K562 (cell line): ENCODE measurements at regions of chr1 and their contacts with region 1.

Region 1: DNA sequence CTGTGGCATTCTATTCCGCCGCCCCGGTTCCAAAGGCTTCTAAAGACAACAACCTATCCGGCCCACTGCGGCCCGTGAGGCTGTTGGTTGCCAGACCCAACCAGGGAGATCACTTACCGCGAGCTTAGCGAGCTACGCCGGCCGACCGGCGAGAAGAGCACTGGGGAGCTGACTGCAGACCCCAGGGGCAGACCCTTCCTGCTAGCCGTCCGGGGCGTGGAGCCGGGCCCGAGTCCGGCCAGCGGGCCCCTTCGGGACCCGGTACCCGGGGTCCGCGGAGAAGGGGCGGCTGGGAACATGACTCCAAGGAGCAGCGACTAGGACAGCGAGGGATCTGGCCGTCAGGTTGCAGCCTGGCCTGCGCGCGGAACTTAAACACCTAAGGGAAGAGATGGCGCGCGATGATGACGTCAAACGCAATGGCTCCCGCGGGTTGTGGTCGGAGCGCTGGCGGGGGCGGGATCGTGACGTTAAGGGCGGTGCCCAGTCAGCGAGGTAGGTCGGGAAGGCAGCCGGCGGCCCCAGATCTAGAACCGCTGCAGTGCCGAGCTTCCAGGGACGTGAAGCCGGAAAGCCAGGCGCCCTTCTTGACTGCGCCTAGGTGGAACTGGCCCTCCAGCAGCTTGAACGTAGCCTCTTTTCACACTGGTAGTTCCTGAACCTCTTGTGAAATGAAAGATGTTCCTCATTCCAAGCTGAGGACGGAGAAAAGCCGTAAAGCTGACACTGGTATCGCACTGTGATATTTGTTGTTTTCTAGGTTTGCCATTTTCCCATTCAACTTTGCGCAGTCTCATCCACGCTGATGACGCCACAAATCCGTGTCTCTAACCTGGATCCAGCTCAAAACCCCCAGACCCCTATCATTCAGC is at the start of gene NUP133:
- DNase-seq: peak; percentile 98 to 100 (median 98)
- ATAC-seq: peak; percentile 96
- H3K4me3 ChIP-seq: peak within 1 kb of the TSS; percentile 96
- H3K27ac ChIP-seq: peak within 1 kb of the TSS; percentile 97
- H3K4me1 ChIP-seq: peaks cover 6 to 14% of the 10 kb centered on the region in 2 experiments; a peak in 3 of 5 replicates
- H3K27me3 ChIP-seq: no peaks in the 10 kb centered on the region
- CTCF ChIP-seq: no peak
- EP300 ChIP-seq: no peak
- POLR2A ChIP-seq: peak; percentile 99
- RAD21 ChIP-seq: no peak
- polyA plus RNA-seq, gene NUP133: 21.7 to 35.0 TPM

Region 2: GRCh38 chr1:229248821-229249817 is 259.1 kb before region 1 on chr1:
- CTCF ChIA-PET with region 1: no interaction called
- POLR2A ChIA-PET with region 1: no interaction called
- in situ Hi-C with region 1: no loop called
- intact Hi-C with region 1: no loop called
- DNase-seq: no peak
- ATAC-seq: peak; percentile 53
- H3K4me3 ChIP-seq: no peak overlapping the region
- H3K27ac ChIP-seq: no peak overlapping the region
- H3K4me1 ChIP-seq: peaks cover 4 to 9% of the 10 kb centered on the region in 2 experiments; a peak in 2 of 5 replicates
- H3K27me3 ChIP-seq: peaks cover 15 to 18% of the 10 kb centered on the region in 2 experiments; a peak in 4 of 5 replicates
- CTCF ChIP-seq: no peak
- EP300 ChIP-seq: no peak
- POLR2A ChIP-seq: no peak
- RAD21 ChIP-seq: no peak

Region 3: DNA sequence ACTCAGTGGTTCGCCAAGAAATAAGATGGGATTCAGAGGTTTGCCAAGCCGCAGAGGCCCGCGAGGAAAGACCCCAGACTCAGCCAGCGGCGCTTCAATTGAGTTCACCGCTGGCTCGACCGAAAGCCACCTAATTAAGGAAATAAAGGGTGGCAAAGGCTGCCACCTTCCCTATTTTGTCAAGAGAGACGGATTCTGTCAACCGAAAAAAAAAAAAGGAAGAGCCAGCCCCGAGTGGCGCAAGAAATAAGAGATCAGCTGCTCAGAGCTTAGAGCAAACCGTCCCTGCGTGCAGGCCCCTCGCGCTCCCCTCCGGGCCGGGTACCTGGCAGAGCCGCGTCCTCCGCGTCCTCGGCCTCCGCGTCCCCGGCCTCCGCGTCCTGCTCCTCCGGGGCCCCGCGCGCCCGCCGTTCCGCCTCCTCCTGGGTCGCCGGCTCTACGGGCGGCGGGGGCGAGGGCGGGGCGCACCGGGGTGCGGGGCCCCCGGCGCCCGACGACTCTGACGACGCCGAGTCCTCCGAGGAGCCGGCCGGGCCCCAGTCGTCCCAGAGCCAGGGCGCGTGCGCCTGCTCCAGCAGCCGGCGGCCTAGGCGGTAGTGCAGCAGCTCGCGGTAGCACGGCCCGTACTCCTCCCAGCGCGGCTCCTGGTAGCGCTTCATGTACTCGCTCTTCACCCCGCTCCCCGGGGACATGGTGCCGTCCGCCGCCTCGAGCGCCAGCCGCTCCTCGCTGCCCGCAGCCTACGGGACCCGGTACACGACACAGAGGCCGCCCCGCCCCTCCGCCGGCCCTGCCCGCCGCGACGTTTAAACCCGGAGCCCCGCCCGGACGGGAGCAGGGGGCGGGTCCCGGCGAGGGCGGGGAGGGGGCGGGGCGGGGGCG is 166.2 kb before region 1 on chr1:
- CTCF ChIA-PET with region 1: no interaction called
- POLR2A ChIA-PET with region 1: interaction called, 4 read pairs
- in situ Hi-C with region 1: no loop called
- intact Hi-C with region 1: loop called (anchors 5 kb)
- DNase-seq: peak; percentile 89 to 97 (median 96)
- ATAC-seq: peak; percentile 91
- H3K4me3 ChIP-seq: peak overlapping the region; percentile 85
- H3K27ac ChIP-seq: peak overlapping the region; percentile 79
- H3K4me1 ChIP-seq: peaks cover 17 to 24% of the 10 kb centered on the region in 2 experiments; a peak in 4 of 5 replicates
- H3K27me3 ChIP-seq: peaks cover under 1 to 5% of the 10 kb centered on the region in 2 experiments; a peak in 3 of 5 replicates
- CTCF ChIP-seq: no peak
- EP300 ChIP-seq: no peak
- POLR2A ChIP-seq: peak; percentile 70
- RAD21 ChIP-seq: no peak

Region 4: DNA sequence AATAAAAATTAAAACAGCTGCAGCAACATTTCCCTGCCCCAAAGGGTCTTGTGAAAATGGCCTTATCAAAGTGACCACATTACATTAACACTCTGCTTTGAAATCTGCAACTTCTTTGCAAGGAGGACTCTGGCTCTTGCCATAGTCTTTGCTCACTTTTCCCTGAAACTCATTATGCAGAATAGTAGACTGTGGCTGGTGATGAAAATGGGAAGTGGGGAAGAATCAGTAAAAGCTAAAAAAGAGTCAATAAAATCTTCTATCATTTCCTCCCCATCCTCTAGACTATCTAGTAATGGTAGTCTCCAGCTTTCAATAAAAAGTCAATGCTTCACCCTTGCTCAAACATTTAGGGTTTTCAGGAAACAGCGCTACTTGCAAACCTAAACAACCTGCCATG is 18.5 kb after region 1 on chr1:
- CTCF ChIA-PET with region 1: no interaction called
- POLR2A ChIA-PET with region 1: interaction called, 20 read pairs
- in situ Hi-C with region 1: no loop called
- intact Hi-C with region 1: no loop called
- DNase-seq: no peak
- ATAC-seq: no peak
- H3K4me3 ChIP-seq: no peak overlapping the region
- H3K27ac ChIP-seq: no peak overlapping the region
- H3K4me1 ChIP-seq: no peaks in the 10 kb centered on the region
- H3K27me3 ChIP-seq: no peaks in the 10 kb centered on the region
- CTCF ChIP-seq: no peak
- EP300 ChIP-seq: no peak
- POLR2A ChIP-seq: no peak
- RAD21 ChIP-seq: no peak

Region 5: GRCh38 chr1:229558571-229559335 is 50.6 kb after region 1 on chr1 and contains the start of gene ABCB10:
- CTCF ChIA-PET with region 1: no interaction called
- POLR2A ChIA-PET with region 1: interaction called, 9 read pairs
- in situ Hi-C with region 1: no loop called
- intact Hi-C with region 1: loop called (anchors 2 kb)
- DNase-seq: peak; percentile 97 to 100 (median 98)
- ATAC-seq: peak; percentile 84
- H3K4me3 ChIP-seq: peak within 1 kb of the TSS; percentile 79
- H3K27ac ChIP-seq: peak within 1 kb of the TSS; percentile 77
- H3K4me1 ChIP-seq: peaks cover 27 to 41% of the 10 kb centered on the region in 2 experiments; a peak in 4 of 5 replicates
- H3K27me3 ChIP-seq: no peaks in the 10 kb centered on the region; a peak in 1 of 5 replicates
- CTCF ChIP-seq: peak; percentile 97 to 98 (median 98)
- EP300 ChIP-seq: 0 out of 2 replicates have a peak, but pooled peaks have one; percentile 3
- POLR2A ChIP-seq: peak; percentile 84
- RAD21 ChIP-seq: peak; percentile 55 to 56
- polyA plus RNA-seq, gene ABCB10: 12.4 to 16.5 TPM